Activated CD4-positive, alpha-beta T cell treated with anti-CD3 and anti-CD28 coated beads for 36 hours (primary cell): ENCODE measurements at regions of chr17 and their contacts with region 1.

Region 1: GRCh38 chr17:75154195-75155106 is at the start of gene JPT1:
- DNase-seq: peak; percentile 99
- ATAC-seq: peak; percentile 98
- H3K4me3 Mint-ChIP-seq: peak within 1 kb of the TSS; percentile 96
- H3K27ac Mint-ChIP-seq: peak within 1 kb of the TSS; percentile 89
- H3K4me1 Mint-ChIP-seq: peaks cover 36% of the 10 kb centered on the region
- H3K27me3 Mint-ChIP-seq: no peaks in the 10 kb centered on the region
- total RNA-seq, gene JPT1: 234 to 238 TPM

Region 2: DNA sequence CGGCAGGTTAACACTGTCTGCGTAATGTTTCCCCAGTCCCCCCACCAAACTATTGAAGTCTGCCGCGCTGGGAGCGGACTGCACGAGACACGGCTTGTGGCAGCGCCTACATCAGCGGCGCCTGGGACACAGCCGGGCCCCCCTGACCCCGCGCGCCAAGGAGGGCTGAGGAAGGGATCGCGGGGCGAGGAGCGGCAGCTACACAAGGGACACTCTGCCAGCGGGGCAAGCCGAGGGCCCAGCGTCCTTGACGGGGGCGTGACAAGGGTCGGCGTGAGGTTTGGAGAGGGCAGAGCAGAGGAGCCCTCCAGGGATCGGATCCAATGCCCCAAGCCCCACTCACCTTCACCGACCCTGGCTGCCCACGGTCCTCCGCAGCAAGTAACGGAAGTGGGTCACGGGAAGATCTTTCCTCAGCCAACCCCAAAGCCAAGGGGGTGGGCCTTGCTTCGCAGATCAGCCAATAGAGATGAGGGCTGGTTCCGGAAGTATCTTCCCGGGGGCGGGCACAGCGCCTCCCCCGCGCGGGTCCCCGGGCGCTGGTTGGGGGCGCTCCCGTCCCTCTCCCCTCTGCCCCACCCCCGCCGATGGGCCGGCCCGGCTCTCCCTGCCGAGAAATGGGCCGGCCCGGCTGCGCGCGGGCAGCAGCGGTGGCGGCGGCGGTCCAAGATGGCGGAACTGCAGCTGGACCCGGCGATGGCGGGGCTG is 107.7 kb before region 1 on chr17 and contains the starts of genes ATP5PD and KCTD2:
- CTCF ChIA-PET with region 1: no interaction called
- POLR2A ChIA-PET with region 1: no interaction called
- intact Hi-C with region 1: loop called in 1 of 2 experiments (anchors 1 kb)
- DNase-seq: peak; percentile 97
- ATAC-seq: peak; percentile 95
- H3K4me3 Mint-ChIP-seq: peak within 1 kb of the TSS; percentile 99
- H3K27ac Mint-ChIP-seq: peak within 1 kb of the TSS; percentile 94
- H3K4me1 Mint-ChIP-seq: peaks cover 37% of the 10 kb centered on the region
- H3K27me3 Mint-ChIP-seq: no peaks in the 10 kb centered on the region
- total RNA-seq, gene ATP5PD: 194 to 237 TPM
- total RNA-seq, gene KCTD2: 15.3 to 16.7 TPM

Region 3: GRCh38 chr17:75131280-75132017 is 23.0 kb before region 1 on chr17 and contains the start of gene NT5C:
- CTCF ChIA-PET with region 1: interaction called, 3 read pairs
- POLR2A ChIA-PET with region 1: interaction called, 4 read pairs
- intact Hi-C with region 1: loop called in 1 of 2 experiments (anchors 1 kb)
- DNase-seq: peak; percentile 84
- ATAC-seq: peak; percentile 82
- H3K4me3 Mint-ChIP-seq: peak within 1 kb of the TSS; percentile 83
- H3K27ac Mint-ChIP-seq: peak within 1 kb of the TSS; percentile 90
- H3K4me1 Mint-ChIP-seq: peaks cover 11% of the 10 kb centered on the region
- H3K27me3 Mint-ChIP-seq: no peaks in the 10 kb centered on the region
- total RNA-seq, gene NT5C: 51.7 to 61.5 TPM

Region 4: DNA sequence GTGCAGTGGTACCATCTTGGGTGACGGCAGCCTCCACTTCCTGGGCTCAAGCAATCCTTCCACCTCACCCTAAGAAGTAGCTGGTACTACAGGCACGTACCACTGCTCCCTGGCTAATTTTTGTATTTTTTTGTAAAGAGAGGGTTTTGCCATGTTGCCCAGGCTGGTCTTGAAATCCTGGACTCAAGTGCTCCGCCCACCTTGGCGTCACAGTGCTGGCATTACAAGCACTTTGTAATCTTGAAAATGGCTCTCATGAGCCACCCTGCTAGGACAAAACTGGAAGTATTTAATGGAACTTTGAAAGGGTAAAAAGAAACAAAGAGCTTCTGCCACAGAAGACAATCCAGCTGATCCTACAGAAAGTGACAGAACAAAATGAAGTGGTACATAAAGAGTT is 19.1 kb after region 1 on chr17:
- CTCF ChIA-PET with region 1: interaction called, 12 read pairs
- POLR2A ChIA-PET with region 1: interaction called, 5 read pairs
- intact Hi-C with region 1: no loop called
- DNase-seq: no peak
- ATAC-seq: no peak
- H3K4me3 Mint-ChIP-seq: no peak overlapping the region
- H3K27ac Mint-ChIP-seq: no peak overlapping the region
- H3K4me1 Mint-ChIP-seq: peaks cover 14% of the 10 kb centered on the region
- H3K27me3 Mint-ChIP-seq: no peaks in the 10 kb centered on the region

Region 5: DNA sequence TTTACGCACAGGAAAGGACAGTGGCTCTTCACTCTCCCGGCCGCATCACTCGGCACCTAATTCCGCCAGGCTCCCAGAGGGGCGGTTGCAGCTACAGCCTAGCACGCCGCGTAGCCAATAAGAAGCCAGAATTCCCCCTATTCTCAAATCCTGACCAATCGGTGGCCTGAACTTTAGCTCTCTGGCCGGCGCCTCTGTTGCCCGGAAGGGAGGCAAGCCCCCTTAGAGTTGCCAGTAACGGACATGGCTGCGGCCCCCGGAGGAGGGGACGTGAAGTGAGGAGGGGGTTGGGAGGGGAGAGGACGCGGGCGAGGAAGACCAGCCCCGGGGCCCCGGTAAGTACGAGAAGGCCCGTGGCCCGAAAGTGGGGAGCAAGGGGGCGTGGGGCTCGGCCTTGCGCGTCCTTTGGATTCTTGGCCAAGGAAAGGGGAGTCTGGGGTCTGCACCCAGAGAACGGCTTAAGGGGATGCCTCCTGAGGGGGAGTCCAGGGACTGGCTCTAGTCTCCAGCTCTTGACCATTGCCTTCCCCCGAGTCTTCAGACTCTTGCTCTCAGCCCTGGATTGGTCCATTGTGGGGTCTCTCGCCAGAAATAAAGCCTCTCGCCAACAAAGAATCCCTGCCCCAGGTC is 302.1 kb after region 1 on chr17 and contains the start of gene TMEM94:
- CTCF ChIA-PET with region 1: no interaction called
- POLR2A ChIA-PET with region 1: no interaction called
- intact Hi-C with region 1: loop called in 1 of 2 experiments (anchors 5 kb)
- DNase-seq: peak; percentile 95
- ATAC-seq: peak; percentile 99
- H3K4me3 Mint-ChIP-seq: peak within 1 kb of the TSS; percentile 89
- H3K27ac Mint-ChIP-seq: peak within 1 kb of the TSS; percentile 92
- H3K4me1 Mint-ChIP-seq: peaks cover 24% of the 10 kb centered on the region
- H3K27me3 Mint-ChIP-seq: no peaks in the 10 kb centered on the region
- total RNA-seq, gene TMEM94: 51.4 to 62.5 TPM

Region 6: GRCh38 chr17:75524953-75525719 is 370.7 kb after region 1 on chr17 and contains the start of gene LLGL2:
- CTCF ChIA-PET with region 1: no interaction called
- POLR2A ChIA-PET with region 1: no interaction called
- intact Hi-C with region 1: loop called in 1 of 2 experiments (anchors 2 kb)
- DNase-seq: peak; percentile 88
- ATAC-seq: peak; percentile 89
- H3K4me3 Mint-ChIP-seq: peak within 1 kb of the TSS; percentile 62
- H3K27ac Mint-ChIP-seq: no peak within 1 kb of the TSS
- H3K4me1 Mint-ChIP-seq: peaks cover 10% of the 10 kb centered on the region
- H3K27me3 Mint-ChIP-seq: no peaks in the 10 kb centered on the region
- total RNA-seq, gene LLGL2: 7.1 to 9.6 TPM